ENCODE measurements at regions of chr14 and their contacts with region 1.

Region 1: DNA sequence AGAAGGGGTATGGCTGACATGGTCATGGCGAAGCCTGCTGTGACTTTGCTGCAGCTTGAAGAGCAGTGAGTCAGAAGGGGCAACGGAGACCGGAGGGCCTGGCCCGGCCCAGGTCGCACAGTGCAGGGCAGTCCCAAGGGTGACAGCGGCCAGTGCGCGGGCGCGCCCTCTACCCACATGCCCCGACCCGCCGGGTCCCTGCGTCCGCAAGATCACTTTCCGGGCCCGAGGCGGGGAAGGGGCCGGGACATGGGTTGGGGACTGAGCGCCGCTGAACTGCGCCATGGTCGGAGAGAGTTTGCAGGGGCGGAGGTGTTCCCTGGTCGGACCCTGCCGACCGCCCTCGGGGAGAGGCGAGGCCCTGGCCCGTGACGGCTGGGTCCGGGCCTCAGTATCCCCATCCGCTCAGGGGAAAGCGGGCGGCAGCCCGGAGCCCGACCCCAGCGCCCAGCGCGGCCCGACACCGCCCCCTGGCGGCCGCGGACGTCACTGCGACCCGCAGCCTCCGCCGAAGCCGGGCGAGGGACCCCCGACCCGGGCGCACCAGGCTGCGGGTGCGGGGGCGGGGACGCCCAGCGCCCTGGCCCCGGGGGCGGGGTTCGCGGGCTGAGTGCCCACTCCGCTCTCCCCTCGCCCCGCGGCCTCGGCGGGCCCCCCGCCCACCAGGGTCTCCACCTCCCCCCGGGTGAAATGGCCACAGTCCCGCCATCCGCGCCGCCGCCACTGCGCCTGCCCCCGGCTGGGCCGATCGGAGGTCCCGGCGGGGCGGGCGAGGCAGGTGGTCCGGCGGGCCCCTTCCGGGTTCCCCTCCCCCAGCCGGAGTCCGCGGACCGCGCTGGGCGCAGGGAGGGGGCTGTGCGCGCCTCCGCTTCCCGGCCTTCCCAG is 7.2 kb upstream of the ANKRD9 start:
- DNase-seq: peak in 1 of 2 donors; percentile 90
- H3K4me3 ChIP-seq: peak overlapping the region; percentile 77
- CTCF ChIP-seq: no peak
- POLR2A ChIP-seq: no peak

Region 2: DNA sequence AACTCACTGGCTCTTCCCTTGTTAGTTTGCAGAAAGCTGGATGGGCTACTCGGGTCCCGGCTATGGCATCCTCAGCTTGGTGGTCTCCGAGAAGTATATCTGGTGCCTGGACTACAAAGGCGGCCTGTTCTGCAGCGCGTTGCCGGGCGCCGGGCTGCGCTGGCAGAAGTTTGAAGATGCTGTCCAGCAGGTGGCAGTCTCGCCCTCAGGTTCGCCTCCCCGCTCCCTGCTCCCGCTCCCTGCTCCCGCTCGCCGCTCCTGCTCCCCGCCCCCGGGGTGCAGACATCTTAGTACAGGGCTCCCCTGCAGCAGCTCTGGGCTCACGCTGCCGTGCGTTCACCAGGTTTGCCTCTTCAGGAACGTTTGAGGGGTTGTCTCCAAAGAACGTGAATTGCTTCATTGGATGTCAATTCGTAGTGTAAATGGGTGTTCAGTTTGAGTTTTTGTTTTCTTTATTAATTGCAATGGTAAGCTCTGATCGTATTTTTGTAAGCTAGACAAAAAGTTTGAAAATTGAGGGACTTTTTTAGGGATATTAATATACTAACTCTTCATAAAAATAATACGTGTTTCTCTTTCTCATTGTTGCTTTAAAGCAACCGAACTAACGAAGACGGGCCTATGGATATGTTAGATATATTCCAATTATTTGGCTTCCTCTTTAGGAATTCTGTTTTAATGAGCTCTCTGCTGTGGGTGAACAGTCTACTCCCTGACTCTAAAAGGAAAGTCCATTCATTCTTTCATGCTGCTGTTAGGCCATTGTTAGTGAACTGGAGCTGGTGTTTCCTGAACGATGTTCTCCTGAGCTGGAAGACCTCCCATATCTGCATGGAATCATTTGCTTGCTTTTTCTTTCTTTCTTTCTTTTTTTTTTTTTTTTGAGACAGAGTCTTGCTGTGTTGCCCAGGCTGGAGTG is 78.5 kb before region 1 on chr14:
- intact Hi-C with region 1: loop called (anchors 5 kb)
- DNase-seq: peak; percentile 77 to 98
- H3K4me3 ChIP-seq: no peak overlapping the region
- CTCF ChIP-seq: peak in 1 of 3 donors; percentile 29
- POLR2A ChIP-seq: no peak

Region 3: GRCh38 chr14:102479777-102480176 is 37.0 kb before region 1 on chr14:
- intact Hi-C with region 1: no loop called
- DNase-seq: no peak
- H3K4me3 ChIP-seq: no peak overlapping the region
- CTCF ChIP-seq: no peak
- POLR2A ChIP-seq: no peak

Measured in lower leg skin (tissue), 4 donors.